AG04450 (cell line): ENCODE measurements at regions of chr3 and their contacts with region 1.

Region 1: GRCh38 chr3:12719984-12720898 is 38.8 kb downstream of the TMEM40 start:
- DNase-seq: peak; percentile 56
- H3K4me3 ChIP-seq: peak overlapping the region; percentile 58
- H3K27ac ChIP-seq: no peak overlapping the region
- H3K27me3 ChIP-seq: no peaks in the 10 kb centered on the region
- CTCF ChIP-seq: peak; percentile 98

Region 2: GRCh38 chr3:11096266-11097135 is 1623.7 kb before region 1 on chr3:
- CTCF ChIA-PET with region 1: no interaction called
- POLR2A ChIA-PET with region 1: interaction called, 12 read pairs
- DNase-seq: peak; percentile 69
- H3K4me3 ChIP-seq: peak overlapping the region; percentile 56
- H3K27ac ChIP-seq: peak overlapping the region; percentile 96
- H3K27me3 ChIP-seq: no peaks in the 10 kb centered on the region
- CTCF ChIP-seq: no peak

Region 3: GRCh38 chr3:12363397-12364195 is 356.6 kb before region 1 on chr3:
- CTCF ChIA-PET with region 1: no interaction called
- POLR2A ChIA-PET with region 1: no interaction called
- DNase-seq: no peak
- H3K4me3 ChIP-seq: no peak overlapping the region
- H3K27ac ChIP-seq: no peak overlapping the region
- H3K27me3 ChIP-seq: no peaks in the 10 kb centered on the region
- CTCF ChIP-seq: no peak

Region 4: GRCh38 chr3:12608376-12608775 is 111.9 kb before region 1 on chr3:
- CTCF ChIA-PET with region 1: interaction called, 13 read pairs
- POLR2A ChIA-PET with region 1: no interaction called
- DNase-seq: no peak
- H3K4me3 ChIP-seq: no peak overlapping the region
- H3K27ac ChIP-seq: peak overlapping the region; percentile 47
- H3K27me3 ChIP-seq: no peaks in the 10 kb centered on the region
- CTCF ChIP-seq: no peak

Region 5: DNA sequence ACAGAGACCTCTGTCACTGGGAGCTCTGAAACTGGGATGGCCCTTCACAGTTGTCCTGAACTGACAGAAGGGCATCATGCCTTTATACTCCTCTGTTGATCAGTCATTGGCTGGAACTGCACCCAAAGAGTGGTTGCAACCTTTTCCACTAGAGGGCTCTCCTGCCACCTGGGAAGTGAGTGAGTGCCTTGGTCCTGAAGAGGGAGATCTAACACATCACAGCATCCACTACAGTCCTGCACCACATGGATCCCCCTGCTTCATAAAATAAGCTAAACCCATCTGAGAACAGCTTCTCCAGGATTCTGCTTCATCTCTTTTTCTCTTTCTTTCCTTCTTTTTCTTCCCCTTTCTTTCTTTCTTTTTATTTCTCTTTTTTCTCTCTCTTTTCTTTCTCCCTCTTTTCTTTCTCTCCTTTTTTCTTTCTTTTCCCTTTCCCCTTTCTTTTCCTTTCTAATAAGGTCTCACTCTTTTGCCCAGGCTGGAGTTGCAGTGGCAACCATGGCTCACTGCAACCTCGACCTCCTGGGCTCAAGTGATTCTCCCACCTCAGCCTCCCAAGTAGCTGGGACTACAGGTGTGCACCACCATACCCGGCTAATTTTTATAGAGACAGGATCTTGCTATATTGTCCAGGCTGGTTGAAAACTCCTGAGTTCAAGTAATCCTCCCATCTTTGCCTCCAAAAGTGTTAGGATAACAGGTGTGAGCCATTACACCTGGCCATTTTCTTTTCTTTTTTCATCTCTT is 13.6 kb before region 1 on chr3:
- CTCF ChIA-PET with region 1: interaction called, 31 read pairs
- POLR2A ChIA-PET with region 1: no interaction called
- DNase-seq: no peak
- H3K4me3 ChIP-seq: no peak overlapping the region
- H3K27ac ChIP-seq: no peak overlapping the region
- H3K27me3 ChIP-seq: no peaks in the 10 kb centered on the region
- CTCF ChIP-seq: peak; percentile 85

Region 6: DNA sequence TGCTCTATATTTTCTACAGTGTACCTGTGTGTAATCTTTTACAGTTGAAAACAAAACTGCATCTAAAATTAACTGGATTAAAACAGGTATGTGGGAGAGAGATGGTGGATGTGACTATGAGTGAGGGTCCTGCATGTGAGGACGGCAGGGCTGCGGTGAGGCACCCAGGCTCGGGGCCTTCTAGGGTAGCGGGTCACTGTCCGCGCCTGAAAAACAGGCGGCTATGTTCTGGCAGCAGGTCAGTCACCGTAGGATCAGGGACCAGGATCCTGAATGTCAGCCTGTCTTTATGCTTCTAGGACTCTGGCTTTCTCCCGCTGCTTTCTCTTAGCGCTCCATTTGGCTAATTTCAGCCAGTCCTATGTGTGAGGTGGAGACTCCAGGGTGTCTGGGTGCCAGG is 26.2 kb after region 1 on chr3:
- CTCF ChIA-PET with region 1: interaction called, 16 read pairs
- POLR2A ChIA-PET with region 1: no interaction called
- DNase-seq: no peak
- H3K4me3 ChIP-seq: no peak overlapping the region
- H3K27ac ChIP-seq: no peak overlapping the region
- H3K27me3 ChIP-seq: peaks cover 10% of the 10 kb centered on the region
- CTCF ChIP-seq: no peak

Region 7: DNA sequence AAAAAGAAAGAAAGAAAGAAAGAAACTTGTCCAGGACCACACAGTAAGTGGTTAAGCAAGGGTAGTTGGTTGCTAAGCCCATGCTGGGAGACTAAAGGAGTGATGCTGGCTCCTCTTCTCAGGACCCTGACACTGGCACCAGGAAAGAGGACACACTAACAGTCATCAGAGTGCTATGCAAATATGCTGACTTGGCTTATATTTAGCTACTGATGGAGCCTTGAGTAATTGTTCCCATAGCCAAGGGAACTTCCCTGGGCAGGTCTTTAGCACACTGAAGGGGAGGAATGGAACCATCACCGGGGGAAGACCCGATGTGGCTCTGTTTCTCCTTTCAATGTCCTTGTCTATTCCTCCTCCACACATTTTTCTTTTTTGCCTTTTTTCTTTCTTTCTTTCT is 32.6 kb after region 1 on chr3:
- CTCF ChIA-PET with region 1: interaction called, 12 read pairs
- POLR2A ChIA-PET with region 1: no interaction called
- DNase-seq: no peak
- H3K4me3 ChIP-seq: no peak overlapping the region
- H3K27ac ChIP-seq: no peak overlapping the region
- H3K27me3 ChIP-seq: no peaks in the 10 kb centered on the region
- CTCF ChIP-seq: no peak